CD14-positive monocyte (primary cell): ENCODE measurements at regions of chr5 and their contacts with region 1.

Region 1: DNA sequence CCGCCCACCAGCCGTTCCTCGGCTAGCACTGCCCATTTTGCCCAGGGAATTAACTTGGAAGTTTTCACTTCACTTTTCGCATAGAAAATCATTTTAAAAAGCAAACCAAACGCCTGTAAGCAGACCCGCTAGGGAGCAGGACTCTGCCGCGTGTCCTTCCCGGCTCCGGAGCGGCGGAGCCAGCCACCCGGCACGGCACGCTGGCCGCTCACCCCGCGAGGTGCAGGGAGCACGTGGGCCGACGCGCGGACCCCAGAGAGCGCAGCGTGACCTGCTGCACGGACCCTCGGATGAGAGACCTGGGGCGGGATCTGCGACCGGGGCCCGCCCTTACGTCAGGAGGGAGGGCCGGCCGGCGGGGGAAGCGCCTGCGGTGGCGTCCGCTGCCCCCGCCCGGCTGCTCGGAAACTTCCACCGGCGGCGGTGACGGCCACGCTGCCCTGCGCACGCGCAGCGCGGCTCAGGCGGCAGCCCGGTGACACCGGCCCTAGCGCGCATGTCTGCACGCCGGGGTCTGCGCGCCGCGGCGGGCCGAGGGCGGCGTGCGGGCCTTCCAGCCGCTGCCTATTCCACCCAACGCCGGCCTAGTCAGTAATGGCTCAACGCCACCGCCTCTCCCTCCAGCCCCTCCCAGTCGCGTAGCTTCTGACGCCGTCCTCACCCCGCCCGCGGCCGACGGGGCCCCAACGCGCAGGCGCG is 506 bp upstream of the TENT4A start:
- DNase-seq: peak; percentile 95 to 98 (median 96)
- H3K4me3 ChIP-seq: peak overlapping the region; percentile 83 to 90 (median 89)
- H3K4me3 Mint-ChIP-seq: peak overlapping the region; percentile 88 to 94
- H3K27ac ChIP-seq: peak overlapping the region; percentile 82 to 96
- H3K27ac Mint-ChIP-seq: peak overlapping the region; percentile 91 to 97 (median 96)
- H3K4me1 ChIP-seq: peaks cover 36 to 41% of the 10 kb centered on the region in 2 donors
- H3K4me1 Mint-ChIP-seq: peaks cover 45% of the 10 kb centered on the region
- H3K27me3 ChIP-seq: no peaks in the 10 kb centered on the region
- H3K27me3 Mint-ChIP-seq: peaks cover 3 to 9% (median 8%) of the 10 kb centered on the region in 3 donors
- CTCF ChIP-seq: no peak

Region 2: GRCh38 chr5:5421961-5422818 is 1290.5 kb before region 1 on chr5 and contains the start of gene ICE1:
- intact Hi-C with region 1: loop called (anchors 2 to 5 kb)
- DNase-seq: peak; percentile 97 to 98 (median 97)
- H3K4me3 ChIP-seq: peak within 1 kb of the TSS; percentile 54 to 89 (median 62)
- H3K4me3 Mint-ChIP-seq: peak within 1 kb of the TSS; percentile 92 to 95
- H3K27ac ChIP-seq: peak within 1 kb of the TSS; percentile 85 to 94
- H3K27ac Mint-ChIP-seq: peak within 1 kb of the TSS; percentile 94 to 97 (median 97)
- H3K4me1 ChIP-seq: peaks cover 22 to 34% of the 10 kb centered on the region in 2 donors
- H3K4me1 Mint-ChIP-seq: peaks cover 15% of the 10 kb centered on the region
- H3K27me3 ChIP-seq: no peaks in the 10 kb centered on the region
- H3K27me3 Mint-ChIP-seq: peaks cover 0 to 5% (median 3%) of the 10 kb centered on the region in 3 donors
- CTCF ChIP-seq: no peak
- polyA plus RNA-seq, gene ICE1: 2.4 to 8.2 (median 6.4) TPM

Region 3: DNA sequence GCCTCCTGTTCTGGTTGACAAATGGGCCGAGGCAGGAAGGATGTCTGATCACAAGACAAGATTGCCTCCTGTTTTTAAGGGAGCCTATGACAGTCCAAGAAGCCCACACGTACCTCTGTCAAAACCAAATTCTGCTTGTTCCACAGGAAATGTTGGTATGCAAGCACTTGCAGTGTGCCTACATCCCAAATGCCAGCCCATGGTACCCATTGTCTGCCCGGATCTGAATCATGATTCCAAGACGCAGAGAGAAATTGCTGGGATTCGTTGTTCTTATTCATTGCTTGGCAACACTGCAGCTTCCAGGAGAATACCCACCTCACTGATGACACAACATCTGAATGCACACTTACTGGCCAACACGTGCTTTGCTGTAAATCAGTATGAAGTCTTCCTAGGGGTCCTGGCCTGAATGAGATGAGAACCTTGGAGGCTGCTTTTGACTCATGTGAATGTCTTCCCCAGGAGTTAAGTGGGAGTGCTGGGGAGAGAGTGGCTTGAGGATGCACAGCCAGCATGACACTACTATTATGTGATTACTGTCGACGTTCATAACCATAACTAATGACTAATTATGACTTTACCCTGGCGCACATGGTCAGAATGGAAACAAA is 68.0 kb before region 1 on chr5:
- intact Hi-C with region 1: loop called in 1 of 2 experiments (anchors 2 kb)
- DNase-seq: peak in 1 of 3 donors; percentile 54
- H3K4me3 ChIP-seq: peak overlapping the region in 1 of 3 experiments; percentile 50
- H3K4me3 Mint-ChIP-seq: peak overlapping the region; percentile 62 to 64
- H3K27ac ChIP-seq: peak overlapping the region; percentile 62 to 85
- H3K27ac Mint-ChIP-seq: peak overlapping the region; percentile 72 to 98 (median 93)
- H3K4me1 ChIP-seq: peaks cover 39 to 48% of the 10 kb centered on the region in 2 donors
- H3K4me1 Mint-ChIP-seq: peaks cover 66% of the 10 kb centered on the region
- H3K27me3 ChIP-seq: no peaks in the 10 kb centered on the region
- H3K27me3 Mint-ChIP-seq: peaks cover 0 to 1% (median 0%) of the 10 kb centered on the region in 3 donors
- CTCF ChIP-seq: no peak

Region 4: GRCh38 chr5:6659941-6660684 is 52.6 kb before region 1 on chr5:
- intact Hi-C with region 1: no loop called
- DNase-seq: no peak
- H3K4me3 ChIP-seq: no peak overlapping the region
- H3K4me3 Mint-ChIP-seq: no peak overlapping the region
- H3K27ac ChIP-seq: peak overlapping the region in 1 of 2 donors; percentile 52
- H3K27ac Mint-ChIP-seq: peak overlapping the region in 3 of 7 donors; percentile 34 to 71 (median 39)
- H3K4me1 ChIP-seq: no peaks in the 10 kb centered on the region
- H3K4me1 Mint-ChIP-seq: peaks cover 3% of the 10 kb centered on the region
- H3K27me3 ChIP-seq: no peaks in the 10 kb centered on the region
- H3K27me3 Mint-ChIP-seq: no peaks in the 10 kb centered on the region
- CTCF ChIP-seq: no peak

Region 5: DNA sequence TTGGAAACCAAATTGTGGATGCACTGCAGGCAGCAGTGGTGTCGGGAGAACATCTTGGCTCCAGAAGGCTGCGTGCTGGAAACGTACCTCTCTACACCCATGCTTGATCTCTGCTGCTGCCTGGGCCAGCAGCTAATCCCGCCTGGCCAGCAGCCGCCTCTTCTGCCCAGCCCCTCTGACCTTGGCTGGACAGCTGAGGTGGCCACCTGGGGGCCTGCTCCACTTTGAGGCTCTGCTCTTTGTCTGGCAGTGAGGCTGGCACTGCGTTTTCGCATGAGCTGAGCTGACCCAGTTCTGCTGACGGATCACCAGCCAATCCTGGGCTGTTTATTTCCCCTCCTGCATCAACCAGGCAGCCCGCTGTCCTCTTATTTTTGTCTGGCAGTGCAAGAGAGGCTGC is 155.4 kb after region 1 on chr5:
- intact Hi-C with region 1: no loop called
- DNase-seq: no peak
- H3K4me3 ChIP-seq: no peak overlapping the region
- H3K4me3 Mint-ChIP-seq: no peak overlapping the region
- H3K27ac ChIP-seq: no peak overlapping the region
- H3K27ac Mint-ChIP-seq: no peak overlapping the region
- H3K4me1 ChIP-seq: no peaks in the 10 kb centered on the region
- H3K4me1 Mint-ChIP-seq: no peaks in the 10 kb centered on the region
- H3K27me3 ChIP-seq: no peaks in the 10 kb centered on the region
- H3K27me3 Mint-ChIP-seq: peaks cover 0 to 1% (median 0%) of the 10 kb centered on the region in 3 donors
- CTCF ChIP-seq: no peak

Region 6: DNA sequence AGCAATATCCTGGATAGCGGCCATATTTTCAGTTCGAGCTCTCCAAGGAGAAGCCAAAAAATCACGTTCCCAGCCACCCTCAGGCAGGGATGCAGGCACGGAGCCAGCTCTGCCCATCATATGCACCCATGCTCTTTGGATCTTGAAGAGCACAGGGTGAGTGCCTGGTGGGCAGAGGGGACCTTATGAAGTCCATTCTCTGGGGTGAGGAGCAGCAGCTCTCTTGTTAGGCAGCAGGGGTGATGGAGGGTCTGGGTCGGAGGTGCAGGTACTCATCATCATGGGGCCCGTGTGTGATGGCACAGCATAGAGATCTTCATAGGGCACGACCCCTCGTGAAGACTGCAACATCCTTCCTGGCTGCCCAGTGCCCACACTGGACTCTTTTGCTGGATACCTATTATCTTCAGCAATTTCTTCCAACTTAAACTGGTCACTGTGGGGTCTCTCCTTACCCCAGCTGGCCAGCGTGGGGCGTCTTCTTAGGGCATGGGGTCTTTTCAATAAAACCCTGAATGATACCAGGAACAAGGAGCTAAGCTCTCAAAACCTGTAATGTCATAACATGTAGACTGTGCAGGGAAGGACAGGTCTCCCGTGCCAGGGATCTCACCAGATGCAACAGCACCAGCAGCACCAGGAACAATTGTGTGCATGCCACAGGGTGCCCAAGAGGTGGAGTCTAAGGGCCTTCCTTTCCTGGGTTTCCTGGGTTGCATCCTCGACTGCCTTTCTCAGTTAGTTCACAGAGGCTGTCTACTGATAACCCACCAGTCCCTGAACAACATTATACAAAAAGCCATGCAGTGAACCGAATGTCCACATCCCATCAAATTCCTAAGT is 165.5 kb after region 1 on chr5:
- intact Hi-C with region 1: no loop called
- DNase-seq: no peak
- H3K4me3 ChIP-seq: no peak overlapping the region
- H3K4me3 Mint-ChIP-seq: no peak overlapping the region
- H3K27ac ChIP-seq: no peak overlapping the region
- H3K27ac Mint-ChIP-seq: no peak overlapping the region
- H3K4me1 ChIP-seq: no peaks in the 10 kb centered on the region
- H3K4me1 Mint-ChIP-seq: no peaks in the 10 kb centered on the region
- H3K27me3 ChIP-seq: no peaks in the 10 kb centered on the region
- H3K27me3 Mint-ChIP-seq: peaks cover 0 to 1% (median 1%) of the 10 kb centered on the region in 3 donors
- CTCF ChIP-seq: no peak

Region 7: DNA sequence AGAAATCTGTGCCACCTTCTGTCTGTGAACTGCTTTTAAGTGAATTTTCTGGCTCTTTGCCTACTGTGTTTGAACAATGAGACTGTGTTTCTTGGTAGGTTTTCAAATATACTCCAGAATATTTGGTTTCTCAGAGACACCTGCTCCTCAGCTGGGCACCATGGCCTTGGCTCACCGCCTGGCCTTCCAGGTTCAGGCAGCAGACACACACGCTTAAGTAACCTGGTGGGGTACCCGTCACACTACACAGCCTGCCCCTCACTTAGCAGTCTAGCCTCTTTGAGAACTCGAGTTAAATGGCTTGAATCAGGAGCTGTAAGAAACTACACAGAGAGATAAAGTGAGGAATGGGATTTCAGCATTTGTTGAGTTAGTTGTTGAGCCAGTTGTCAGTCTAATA is 1686.7 kb after region 1 on chr5:
- intact Hi-C with region 1: no loop called
- DNase-seq: no peak
- H3K4me3 ChIP-seq: no peak overlapping the region
- H3K4me3 Mint-ChIP-seq: no peak overlapping the region
- H3K27ac ChIP-seq: no peak overlapping the region
- H3K27ac Mint-ChIP-seq: no peak overlapping the region
- H3K4me1 ChIP-seq: no peaks in the 10 kb centered on the region
- H3K4me1 Mint-ChIP-seq: no peaks in the 10 kb centered on the region
- H3K27me3 ChIP-seq: no peaks in the 10 kb centered on the region
- H3K27me3 Mint-ChIP-seq: peaks cover 0 to 1% (median 0%) of the 10 kb centered on the region in 3 donors
- CTCF ChIP-seq: no peak